Transverse colon (tissue), 4 donors: ENCODE measurements at regions of chr14 and their contacts with region 1.

Region 1: DNA sequence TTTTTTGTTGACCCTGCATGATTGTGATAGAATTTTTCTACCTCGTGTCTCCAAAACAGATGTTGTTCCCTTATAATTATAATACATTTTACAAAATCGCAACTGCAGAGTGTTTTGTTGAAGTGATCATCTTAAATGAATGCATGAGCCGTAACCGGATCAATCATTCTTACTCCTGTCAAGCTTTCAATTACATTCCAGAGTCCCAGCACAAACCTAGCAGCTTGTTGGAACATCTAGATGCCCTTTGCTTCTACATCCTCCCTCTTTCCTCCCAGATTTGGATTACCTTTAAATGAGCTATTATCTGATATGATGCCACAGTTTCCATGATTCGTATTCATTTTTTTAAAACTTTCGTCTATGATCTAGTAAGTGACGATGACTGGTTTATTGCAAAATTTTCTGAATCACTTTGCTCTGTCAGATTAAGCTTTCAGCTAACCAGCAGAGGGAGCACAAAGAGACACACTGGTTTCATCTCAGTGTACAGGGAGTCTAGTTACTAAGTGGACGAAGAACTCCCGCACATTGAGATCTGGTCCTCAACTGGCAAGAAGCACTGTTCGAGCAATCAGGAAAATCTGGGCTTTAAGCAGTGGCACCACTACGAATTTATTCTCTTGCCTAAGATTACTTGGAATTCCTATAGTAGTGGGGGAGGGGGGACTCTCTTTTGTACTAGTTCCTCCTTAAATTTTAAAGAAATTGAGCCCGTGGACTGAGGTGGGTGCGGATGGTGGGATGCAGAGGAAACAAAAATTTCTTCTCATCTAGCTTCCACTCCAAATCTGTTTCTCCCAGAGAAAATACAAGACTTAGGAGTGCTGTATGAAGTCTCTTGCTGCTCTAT is 40.9 kb downstream of the TSHR start:
- DNase-seq: peak; percentile 12
- H3K4me3 ChIP-seq: no peak overlapping the region
- H3K27ac ChIP-seq: no peak overlapping the region
- H3K4me1 ChIP-seq: peaks cover 0 to 6% (median 0%) of the 10 kb centered on the region in 4 donors
- H3K27me3 ChIP-seq: peaks cover 18% of the 10 kb centered on the region
- CTCF ChIP-seq: peak; percentile 52 to 73 (median 59)
- EP300 ChIP-seq: no peak
- POLR2A ChIP-seq: no peak

Region 2: DNA sequence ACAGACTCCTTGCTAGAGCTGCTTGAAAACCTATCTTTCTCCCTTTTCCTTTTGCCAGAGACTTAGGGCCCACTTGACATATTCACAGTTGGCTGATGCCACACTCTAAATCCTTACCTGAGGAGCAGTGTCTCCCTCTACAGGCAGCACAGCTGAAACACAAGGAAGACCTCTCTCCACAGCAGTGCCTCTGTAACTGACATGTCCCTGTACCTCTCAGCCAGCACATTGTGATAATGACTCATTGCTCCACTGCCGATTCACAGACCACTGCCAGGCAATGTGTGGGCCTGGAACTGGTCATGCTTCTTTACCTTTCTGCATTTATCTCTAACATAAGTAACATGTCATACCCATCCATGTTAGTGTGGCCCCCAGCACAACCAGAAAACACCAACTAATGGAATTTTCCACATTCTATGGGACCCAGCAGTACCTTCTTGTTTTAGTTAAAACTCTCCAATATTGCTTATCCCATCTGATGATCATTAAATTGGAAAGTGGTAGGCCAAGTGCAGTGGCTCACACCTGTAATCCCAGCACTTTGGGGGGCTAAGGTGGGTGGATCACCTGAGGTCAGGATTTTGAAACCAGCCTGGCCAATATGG is 168.0 kb after region 1 on chr14:
- in situ Hi-C with region 1: loop called in 3 of 4 experiments (anchors 10 kb)
- intact Hi-C with region 1: no loop called
- DNase-seq: peak; percentile 49
- H3K4me3 ChIP-seq: no peak overlapping the region
- H3K27ac ChIP-seq: no peak overlapping the region
- H3K4me1 ChIP-seq: peaks cover 0 to 3% (median 1%) of the 10 kb centered on the region in 4 donors
- H3K27me3 ChIP-seq: no peaks in the 10 kb centered on the region
- CTCF ChIP-seq: peak; percentile 25 to 36 (median 30)
- EP300 ChIP-seq: no peak
- POLR2A ChIP-seq: no peak

Region 3: GRCh38 chr14:81170104-81170828 is 174.0 kb after region 1 on chr14:
- in situ Hi-C with region 1: loop called (anchors 5 to 10 kb)
- intact Hi-C with region 1: loop called (anchors 5 kb)
- DNase-seq: peak; percentile 93
- H3K4me3 ChIP-seq: peak overlapping the region; percentile 41 to 76 (median 60)
- H3K27ac ChIP-seq: peak overlapping the region; percentile 91 to 98 (median 94)
- H3K4me1 ChIP-seq: peaks cover 4 to 15% (median 6%) of the 10 kb centered on the region in 4 donors
- H3K27me3 ChIP-seq: no peaks in the 10 kb centered on the region
- CTCF ChIP-seq: peak; percentile 84 to 92 (median 91)
- EP300 ChIP-seq: no peak
- POLR2A ChIP-seq: peak; percentile 70